ENCODE measurements at regions of chr15 and their contacts with region 1.

Region 1: DNA sequence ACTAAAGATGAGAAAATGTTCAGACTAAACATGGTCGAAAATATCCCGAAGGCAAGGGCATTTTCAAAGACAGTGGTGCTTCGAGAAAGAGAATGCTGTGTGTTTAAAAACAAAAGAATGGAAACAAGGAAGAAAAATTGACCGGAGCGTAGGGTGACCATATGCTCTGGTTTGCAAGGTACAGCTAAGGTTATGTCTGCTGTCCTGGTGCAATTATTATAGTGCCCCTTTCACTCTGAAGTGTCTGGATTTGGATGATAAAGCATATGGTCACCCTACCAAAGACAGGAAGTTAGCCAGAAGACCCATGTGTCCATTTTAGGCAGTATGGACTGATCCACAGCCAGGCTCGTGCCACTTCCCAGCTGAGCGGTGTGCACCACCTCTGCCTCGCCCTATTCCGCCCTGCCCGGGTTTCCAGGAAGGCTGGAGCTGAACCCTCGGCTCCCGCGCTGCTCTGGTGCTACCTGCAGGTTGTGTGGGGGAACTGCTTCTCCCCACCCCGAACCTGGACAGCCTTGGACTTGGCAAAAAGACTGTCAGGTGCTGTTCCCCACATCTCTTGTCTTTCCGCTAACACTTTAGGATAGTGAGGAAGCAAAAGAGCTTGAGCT is 25.2 kb downstream of the GOLGA6D start:
- DNase-seq: peak in 1 of 3 donors; percentile 1
- H3K4me3 ChIP-seq: no peak overlapping the region
- H3K4me3 Mint-ChIP-seq: no peak overlapping the region
- H3K27ac ChIP-seq: no peak overlapping the region
- H3K27ac Mint-ChIP-seq: peak overlapping the region in 1 of 7 donors; percentile 4
- H3K4me1 ChIP-seq: no peaks in the 10 kb centered on the region
- H3K4me1 Mint-ChIP-seq: no peaks in the 10 kb centered on the region
- H3K27me3 ChIP-seq: peaks cover 0 to 9% of the 10 kb centered on the region in 2 donors
- H3K27me3 Mint-ChIP-seq: peaks cover 1 to 25% (median 18%) of the 10 kb centered on the region in 3 donors
- CTCF ChIP-seq: peak; percentile 16

Region 2: DNA sequence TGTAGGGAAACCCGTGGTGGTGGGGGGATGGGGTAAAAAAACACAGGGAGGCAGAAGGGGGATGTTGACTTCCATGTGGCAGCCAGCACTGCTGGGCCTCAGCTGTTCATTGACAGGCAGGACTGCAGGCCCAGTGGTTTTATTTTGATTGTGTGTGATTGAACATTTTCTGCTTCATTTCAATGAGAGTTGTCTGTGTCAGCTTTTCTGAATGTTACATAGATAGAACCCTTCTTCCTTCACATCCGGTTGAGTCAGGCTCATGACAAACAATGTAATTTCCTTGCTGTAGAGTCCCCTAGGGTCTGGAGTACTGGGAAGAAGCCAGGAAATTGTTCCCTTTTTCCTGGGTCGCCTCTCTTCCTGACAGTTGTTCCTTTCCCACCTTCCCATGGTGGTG is 343.1 kb before region 1 on chr15:
- intact Hi-C with region 1: loop called in 1 of 2 experiments (anchors 5 kb)
- DNase-seq: no peak
- H3K4me3 ChIP-seq: no peak overlapping the region
- H3K4me3 Mint-ChIP-seq: no peak overlapping the region
- H3K27ac ChIP-seq: no peak overlapping the region
- H3K27ac Mint-ChIP-seq: no peak overlapping the region
- H3K4me1 ChIP-seq: no peaks in the 10 kb centered on the region
- H3K4me1 Mint-ChIP-seq: no peaks in the 10 kb centered on the region
- H3K27me3 ChIP-seq: peaks cover 16 to 31% of the 10 kb centered on the region in 2 donors
- H3K27me3 Mint-ChIP-seq: peaks cover 27 to 38% (median 35%) of the 10 kb centered on the region in 3 donors
- CTCF ChIP-seq: no peak

Region 3: DNA sequence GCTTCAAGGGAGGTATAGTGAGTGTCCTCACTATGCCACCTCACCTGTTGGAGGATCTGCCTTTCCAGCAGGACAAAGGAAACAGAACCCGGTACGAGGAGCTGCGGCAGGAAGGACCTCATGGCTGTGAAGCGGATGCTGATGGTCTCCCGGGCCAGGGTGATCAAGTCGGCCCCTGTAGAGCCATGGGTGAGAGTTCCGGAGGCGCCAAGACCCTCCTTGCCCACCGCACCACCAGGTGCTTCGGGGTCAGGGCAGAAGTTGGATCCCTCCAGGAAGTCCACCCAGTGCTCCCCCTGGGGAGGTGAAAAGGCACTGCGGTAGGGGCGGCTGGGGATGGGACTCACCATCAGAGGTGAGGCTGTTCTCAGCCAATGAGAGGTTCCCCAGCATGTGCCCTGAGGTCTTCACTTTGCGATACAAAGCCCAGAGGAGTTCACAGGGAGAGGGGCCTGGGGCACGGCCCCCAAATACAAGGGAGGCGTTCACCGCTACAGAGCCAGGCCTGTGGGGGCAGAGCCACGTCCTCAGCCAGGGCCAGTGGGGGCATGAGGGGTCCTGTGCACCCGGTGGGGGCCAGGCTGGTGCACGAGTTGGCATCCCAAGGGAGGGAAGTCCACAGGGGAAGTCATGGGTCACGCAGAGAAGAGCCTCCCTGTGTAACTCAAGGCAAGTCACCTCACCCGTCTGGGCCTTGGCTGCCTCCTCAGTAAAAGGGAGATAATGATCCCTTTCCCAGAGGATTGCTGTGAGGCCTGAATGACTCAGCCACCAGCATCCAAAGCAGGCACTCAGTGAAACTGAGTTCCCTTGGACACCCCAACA is 78.5 kb before region 1 on chr15:
- intact Hi-C with region 1: loop called in 1 of 2 experiments (anchors 10 kb)
- DNase-seq: no peak
- H3K4me3 ChIP-seq: no peak overlapping the region
- H3K4me3 Mint-ChIP-seq: no peak overlapping the region
- H3K27ac ChIP-seq: no peak overlapping the region
- H3K27ac Mint-ChIP-seq: no peak overlapping the region
- H3K4me1 ChIP-seq: no peaks in the 10 kb centered on the region
- H3K4me1 Mint-ChIP-seq: no peaks in the 10 kb centered on the region
- H3K27me3 ChIP-seq: no peaks in the 10 kb centered on the region
- H3K27me3 Mint-ChIP-seq: peaks cover 11 to 28% (median 13%) of the 10 kb centered on the region in 3 donors
- CTCF ChIP-seq: no peak

Measured in CD14-positive monocyte (primary cell).